ENCODE measurements at regions of chr17 and their contacts with region 1.

Region 1: GRCh38 chr17:58352014-58352842 is at the start of gene SUPT4H1:
- DNase-seq: peak; percentile 88 to 97
- ATAC-seq: peak; percentile 91 to 97 (median 95)
- H3K4me3 ChIP-seq: peak within 1 kb of the TSS; percentile 87
- H3K4me3 Mint-ChIP-seq: peak within 1 kb of the TSS; percentile 98
- H3K27ac ChIP-seq: peak within 1 kb of the TSS; percentile 93
- H3K27ac Mint-ChIP-seq: peak within 1 kb of the TSS; percentile 96 to 97
- H3K4me1 ChIP-seq: peaks cover 23% of the 10 kb centered on the region
- H3K4me1 Mint-ChIP-seq: peaks cover 65 to 68% of the 10 kb centered on the region in 2 donors
- H3K27me3 ChIP-seq: no peaks in the 10 kb centered on the region
- H3K27me3 Mint-ChIP-seq: no peaks in the 10 kb centered on the region
- CTCF ChIP-seq: no peak
- total RNA-seq, gene SUPT4H1: 55.9 to 68.3 (median 68.1) TPM

Region 2: DNA sequence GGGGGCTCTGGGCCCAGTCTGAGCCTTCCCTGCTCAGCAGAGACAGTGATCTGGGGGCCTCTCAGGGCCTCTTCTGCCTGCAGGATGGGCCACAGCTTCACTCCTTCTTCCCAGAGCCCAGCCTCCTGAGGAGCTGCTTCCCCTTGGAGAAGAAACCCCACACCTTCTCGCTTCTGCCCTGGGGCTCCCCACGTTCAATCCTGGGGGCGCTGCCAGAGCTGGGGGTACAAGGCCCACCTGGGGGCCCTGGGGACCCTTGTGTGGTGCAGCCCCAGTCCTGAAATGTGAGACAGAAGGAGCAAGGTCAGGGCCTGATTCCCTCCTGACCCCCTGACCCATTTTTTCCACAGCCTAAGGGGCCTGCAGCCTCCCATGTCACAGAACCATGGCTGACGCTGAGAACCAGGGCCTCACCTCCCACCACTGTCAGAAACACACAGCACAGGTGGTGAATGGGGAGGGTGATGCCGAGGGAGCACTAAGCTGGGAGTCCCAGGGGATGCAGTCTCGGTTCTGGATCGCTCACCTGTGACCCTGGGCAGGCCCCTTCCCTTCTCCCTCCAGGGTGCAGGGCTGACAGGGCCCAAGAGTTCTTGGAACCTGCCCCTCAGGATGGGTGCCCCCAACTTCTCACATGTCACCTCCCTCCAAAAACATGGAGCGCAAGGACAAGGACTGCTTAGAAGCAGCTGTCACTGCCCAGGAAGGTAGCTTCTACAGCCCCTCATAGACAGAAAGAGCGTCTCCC is 49.9 kb before region 1 on chr17:
- intact Hi-C with region 1: no loop called
- DNase-seq: no peak
- ATAC-seq: no peak
- H3K4me3 ChIP-seq: no peak overlapping the region
- H3K4me3 Mint-ChIP-seq: no peak overlapping the region
- H3K27ac ChIP-seq: no peak overlapping the region
- H3K27ac Mint-ChIP-seq: peak overlapping the region in 1 of 2 donors; percentile 48
- H3K4me1 ChIP-seq: peaks cover 22% of the 10 kb centered on the region
- H3K4me1 Mint-ChIP-seq: peaks cover 0 to 15% of the 10 kb centered on the region in 2 donors
- H3K27me3 ChIP-seq: no peaks in the 10 kb centered on the region
- H3K27me3 Mint-ChIP-seq: no peaks in the 10 kb centered on the region
- CTCF ChIP-seq: no peak

Region 3: DNA sequence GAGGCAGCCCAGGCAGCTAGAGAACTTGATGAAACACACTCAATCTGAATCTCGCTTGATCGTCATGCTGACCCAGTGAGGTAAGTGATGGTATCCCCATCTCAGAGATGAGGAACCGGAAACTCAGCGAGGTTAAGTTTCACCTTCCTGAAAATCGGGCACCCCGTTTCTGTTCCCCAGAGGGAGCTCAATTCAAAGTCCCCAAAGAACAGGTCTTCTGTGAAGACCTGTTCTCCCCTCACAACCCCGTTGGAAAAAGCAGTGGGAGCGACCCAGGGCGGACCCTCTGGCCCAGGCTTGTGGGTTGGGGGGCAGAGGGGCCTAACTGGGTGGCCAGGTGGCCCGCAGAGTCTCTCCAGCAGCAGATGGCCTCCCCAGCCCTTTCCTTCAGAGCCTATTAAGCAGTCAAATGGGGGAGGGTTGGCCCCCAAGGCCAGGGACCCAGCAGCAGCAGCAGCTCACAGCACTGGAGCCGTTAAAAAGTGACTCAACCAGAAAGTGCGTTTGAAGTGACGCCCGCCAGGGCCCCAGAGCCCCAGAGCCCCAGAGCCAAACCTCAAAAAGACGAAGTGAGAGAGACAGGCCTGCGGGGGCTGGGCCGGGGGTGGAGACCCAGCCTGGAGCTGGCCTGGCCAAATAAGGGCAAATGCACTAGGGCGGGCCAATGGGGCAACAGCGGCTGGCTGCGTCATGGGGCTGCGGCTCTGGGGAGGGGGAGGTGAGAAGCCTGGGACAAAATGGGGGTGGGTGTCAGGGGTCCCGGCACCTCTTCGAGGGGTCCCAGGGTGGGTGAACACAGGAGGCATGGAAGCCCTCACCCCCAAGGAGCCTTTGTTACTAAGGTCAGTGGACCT is 14.4 kb before region 1 on chr17:
- intact Hi-C with region 1: loop called (anchors 1 kb)
- DNase-seq: peak; percentile 90 to 93
- ATAC-seq: peak; percentile 65 to 87 (median 78)
- H3K4me3 ChIP-seq: peak overlapping the region; percentile 94
- H3K4me3 Mint-ChIP-seq: peak overlapping the region; percentile 90
- H3K27ac ChIP-seq: peak overlapping the region; percentile 99
- H3K27ac Mint-ChIP-seq: peak overlapping the region; percentile 87 to 93
- H3K4me1 ChIP-seq: peaks cover 96% of the 10 kb centered on the region
- H3K4me1 Mint-ChIP-seq: peaks cover 89 to 91% of the 10 kb centered on the region in 2 donors
- H3K27me3 ChIP-seq: no peaks in the 10 kb centered on the region
- H3K27me3 Mint-ChIP-seq: no peaks in the 10 kb centered on the region
- CTCF ChIP-seq: no peak